ENCODE measurements at regions of chr4 and their contacts with region 1.

Region 1: DNA sequence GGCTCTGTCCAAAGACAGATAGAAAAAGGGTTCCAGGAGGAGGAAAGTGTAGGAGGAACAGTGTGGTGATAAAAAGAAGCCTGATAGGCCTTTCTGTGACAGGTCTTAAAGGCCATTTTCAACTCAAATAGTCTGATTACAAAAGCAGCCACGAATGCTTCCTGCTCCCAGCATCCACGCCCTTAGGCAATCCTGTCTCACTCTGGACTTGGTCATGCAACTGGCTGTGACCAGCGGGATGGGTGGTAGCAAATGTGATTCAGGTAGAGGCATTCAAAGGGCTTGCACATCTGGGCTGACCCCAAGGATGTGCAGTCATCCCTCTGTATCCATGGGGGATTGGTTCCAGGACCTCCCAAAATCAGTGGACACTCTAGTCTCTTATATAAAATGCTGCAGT is 14.4 kb upstream of the SEPSECS start:
- DNase-seq: no peak
- H3K4me3 ChIP-seq: no peak overlapping the region
- H3K27ac ChIP-seq: no peak overlapping the region
- H3K4me1 ChIP-seq: no peaks in the 10 kb centered on the region
- H3K27me3 ChIP-seq: no peaks in the 10 kb centered on the region
- CTCF ChIP-seq: no peak

Region 2: GRCh38 chr4:25234390-25235370 is 60.0 kb after region 1 on chr4:
- intact Hi-C with region 1: loop called (anchors 5 kb)
- DNase-seq: peak; percentile 60
- H3K4me3 ChIP-seq: peak overlapping the region; percentile 97
- H3K27ac ChIP-seq: peak overlapping the region; percentile 98
- H3K4me1 ChIP-seq: no peaks in the 10 kb centered on the region
- H3K27me3 ChIP-seq: no peaks in the 10 kb centered on the region
- CTCF ChIP-seq: peak; percentile 50

Region 3: DNA sequence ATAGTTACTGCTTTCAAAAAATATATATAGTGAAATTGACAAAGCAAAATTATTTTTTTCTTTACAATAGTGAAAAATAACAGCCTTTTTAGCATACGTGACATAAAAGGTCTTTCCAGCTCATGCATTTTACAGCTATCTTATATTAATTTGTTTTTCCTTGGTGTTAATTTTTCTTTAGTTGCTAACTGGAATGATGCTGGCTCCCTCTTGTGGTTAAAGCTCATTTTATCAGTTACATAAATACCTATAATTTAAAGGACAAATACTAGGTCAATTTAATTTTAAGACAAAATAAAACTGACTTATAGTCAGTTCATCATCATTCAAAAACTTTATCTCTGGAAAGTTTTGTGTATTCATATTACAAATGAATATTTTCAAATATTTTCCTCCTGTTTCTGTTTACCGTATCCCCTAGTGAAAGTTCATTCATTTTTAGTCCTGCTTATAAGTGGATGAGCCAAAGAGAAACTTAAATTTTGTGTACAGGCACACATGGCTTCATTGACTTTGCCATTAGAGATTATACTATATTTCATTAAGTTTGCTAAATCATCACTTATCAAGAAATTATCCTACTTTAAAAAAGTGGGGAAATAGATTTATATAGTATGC is 192.4 kb after region 1 on chr4:
- intact Hi-C with region 1: loop called (anchors 2 kb)
- DNase-seq: no peak
- H3K4me3 ChIP-seq: no peak overlapping the region
- H3K27ac ChIP-seq: no peak overlapping the region
- H3K4me1 ChIP-seq: no peaks in the 10 kb centered on the region
- H3K27me3 ChIP-seq: no peaks in the 10 kb centered on the region
- CTCF ChIP-seq: peak; percentile 44